ENCODE measurements at regions of chr2 and their contacts with region 1.

Region 1: GRCh38 chr2:215205787-215206186 is 67.4 kb upstream of the ABCA12 start:
- DNase-seq: no peak
- H3K4me3 ChIP-seq: no peak overlapping the region
- H3K27ac ChIP-seq: no peak overlapping the region
- H3K4me1 ChIP-seq: no peaks in the 10 kb centered on the region
- CTCF ChIP-seq: no peak

Region 2: GRCh38 chr2:215171151-215171550 is 34.6 kb before region 1 on chr2:
- CTCF ChIA-PET with region 1: no interaction called
- POLR2A ChIA-PET with region 1: interaction called, 10 read pairs
- intact Hi-C with region 1: no loop called
- DNase-seq: no peak
- H3K4me3 ChIP-seq: no peak overlapping the region
- H3K27ac ChIP-seq: no peak overlapping the region
- H3K4me1 ChIP-seq: no peaks in the 10 kb centered on the region
- CTCF ChIP-seq: no peak

Measured in OCI-LY7 (cell line).